Activated B cell treated with CpG ODN at 0.5 μM for 24 hours (primary cell): ENCODE measurements at regions of chr15 and their contacts with region 1.

Region 1: GRCh38 chr15:64355944-64356709 is at the start of gene CSNK1G1:
- DNase-seq: peak; percentile 84
- ATAC-seq: peak; percentile 98
- H3K4me3 Mint-ChIP-seq: peak within 1 kb of the TSS; percentile 87
- H3K27ac Mint-ChIP-seq: peak within 1 kb of the TSS; percentile 80
- H3K4me1 Mint-ChIP-seq: peaks cover 17% of the 10 kb centered on the region
- H3K27me3 Mint-ChIP-seq: no peaks in the 10 kb centered on the region
- CTCF ChIP-seq: no peak
- total RNA-seq, gene CSNK1G1: 26.1 and 26.6 TPM in 2 replicates

Region 2: GRCh38 chr15:64381000-64381752 is 25.0 kb after region 1 on chr15 and contains the start of gene PCLAF:
- CTCF ChIA-PET with region 1: no interaction called
- POLR2A ChIA-PET with region 1: interaction called, 3 read pairs
- intact Hi-C with region 1: loop called (anchors 1 kb)
- DNase-seq: peak; percentile 74
- ATAC-seq: peak; percentile 100
- H3K4me3 Mint-ChIP-seq: peak within 1 kb of the TSS; percentile 92
- H3K27ac Mint-ChIP-seq: peak within 1 kb of the TSS; percentile 44
- H3K4me1 Mint-ChIP-seq: peaks cover 20% of the 10 kb centered on the region
- H3K27me3 Mint-ChIP-seq: no peaks in the 10 kb centered on the region
- CTCF ChIP-seq: no peak
- total RNA-seq, gene PCLAF: 2.0 and 3.9 TPM in 2 replicates

Region 3: GRCh38 chr15:64387562-64388168 is 31.5 kb after region 1 on chr15 and contains the start of gene TRIP4:
- CTCF ChIA-PET with region 1: no interaction called
- POLR2A ChIA-PET with region 1: interaction called, 16 read pairs
- intact Hi-C with region 1: loop called (anchors 1 kb)
- DNase-seq: peak; percentile 92
- ATAC-seq: peak; percentile 100
- H3K4me3 Mint-ChIP-seq: peak within 1 kb of the TSS; percentile 98
- H3K27ac Mint-ChIP-seq: peak within 1 kb of the TSS; percentile 94
- H3K4me1 Mint-ChIP-seq: peaks cover 25% of the 10 kb centered on the region
- H3K27me3 Mint-ChIP-seq: no peaks in the 10 kb centered on the region
- CTCF ChIP-seq: no peak
- total RNA-seq, gene TRIP4: 26.3 and 35.0 TPM in 2 replicates

Region 4: GRCh38 chr15:64460206-64460734 is 104.1 kb after region 1 on chr15 and contains the start of gene ZNF609:
- CTCF ChIA-PET with region 1: no interaction called
- POLR2A ChIA-PET with region 1: no interaction called
- intact Hi-C with region 1: loop called (anchors 1 kb)
- DNase-seq: peak; percentile 89
- ATAC-seq: peak; percentile 86
- H3K4me3 Mint-ChIP-seq: peak within 1 kb of the TSS; percentile 92
- H3K27ac Mint-ChIP-seq: peak within 1 kb of the TSS; percentile 81
- H3K4me1 Mint-ChIP-seq: peaks cover 67% of the 10 kb centered on the region
- H3K27me3 Mint-ChIP-seq: no peaks in the 10 kb centered on the region
- CTCF ChIP-seq: no peak
- total RNA-seq, gene ZNF609: 25.9 and 28.6 TPM in 2 replicates

Region 5: DNA sequence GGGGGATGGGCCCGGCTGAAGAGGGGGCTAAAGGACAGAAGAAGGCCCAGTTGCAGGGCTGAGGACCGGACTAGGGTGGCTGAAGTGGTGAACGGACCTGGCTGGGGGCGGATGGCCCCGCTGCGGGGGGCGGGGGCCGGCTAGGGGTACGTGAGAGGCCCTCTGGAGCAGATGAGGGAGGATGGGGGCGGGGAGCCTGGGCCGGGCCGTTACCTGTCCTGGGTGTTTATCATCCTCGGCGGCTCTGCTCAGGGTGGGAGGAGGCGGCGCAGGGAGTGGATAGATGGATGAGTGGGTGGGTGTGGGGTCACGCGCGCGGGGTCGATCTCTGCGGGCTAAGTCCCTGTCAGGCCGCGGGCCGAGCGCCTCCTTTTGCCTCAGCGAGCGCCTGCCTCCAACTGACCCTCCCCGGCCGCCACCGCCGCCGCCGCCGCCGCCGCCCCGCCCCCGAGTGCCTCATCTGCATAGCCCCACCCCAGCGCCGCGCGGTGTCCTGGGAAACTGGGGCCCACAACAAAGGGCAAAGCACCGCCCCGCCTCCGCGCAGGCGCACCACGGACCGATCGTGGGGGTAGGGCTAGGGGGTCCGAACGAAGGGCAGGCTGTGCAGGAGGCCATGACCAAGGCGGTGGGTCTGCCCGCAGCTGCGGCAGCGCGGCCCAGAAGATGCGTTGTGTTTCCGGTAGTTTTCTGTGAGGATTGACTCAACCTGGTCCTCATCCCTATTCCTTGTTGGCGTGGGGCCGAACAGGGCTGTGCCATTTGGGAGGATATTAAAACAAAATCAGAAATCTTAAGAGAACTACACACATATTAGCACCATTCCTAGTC is 346.9 kb after region 1 on chr15:
- CTCF ChIA-PET with region 1: no interaction called
- POLR2A ChIA-PET with region 1: no interaction called
- intact Hi-C with region 1: loop called (anchors 1 kb)
- DNase-seq: peak; percentile 96
- ATAC-seq: peak; percentile 94
- H3K4me3 Mint-ChIP-seq: peak overlapping the region; percentile 89
- H3K27ac Mint-ChIP-seq: peak overlapping the region; percentile 82
- H3K4me1 Mint-ChIP-seq: peaks cover 53% of the 10 kb centered on the region
- H3K27me3 Mint-ChIP-seq: no peaks in the 10 kb centered on the region
- CTCF ChIP-seq: no peak